PC-9 (cell line): ENCODE measurements at regions of chr17 and their contacts with region 1.

Region 1: DNA sequence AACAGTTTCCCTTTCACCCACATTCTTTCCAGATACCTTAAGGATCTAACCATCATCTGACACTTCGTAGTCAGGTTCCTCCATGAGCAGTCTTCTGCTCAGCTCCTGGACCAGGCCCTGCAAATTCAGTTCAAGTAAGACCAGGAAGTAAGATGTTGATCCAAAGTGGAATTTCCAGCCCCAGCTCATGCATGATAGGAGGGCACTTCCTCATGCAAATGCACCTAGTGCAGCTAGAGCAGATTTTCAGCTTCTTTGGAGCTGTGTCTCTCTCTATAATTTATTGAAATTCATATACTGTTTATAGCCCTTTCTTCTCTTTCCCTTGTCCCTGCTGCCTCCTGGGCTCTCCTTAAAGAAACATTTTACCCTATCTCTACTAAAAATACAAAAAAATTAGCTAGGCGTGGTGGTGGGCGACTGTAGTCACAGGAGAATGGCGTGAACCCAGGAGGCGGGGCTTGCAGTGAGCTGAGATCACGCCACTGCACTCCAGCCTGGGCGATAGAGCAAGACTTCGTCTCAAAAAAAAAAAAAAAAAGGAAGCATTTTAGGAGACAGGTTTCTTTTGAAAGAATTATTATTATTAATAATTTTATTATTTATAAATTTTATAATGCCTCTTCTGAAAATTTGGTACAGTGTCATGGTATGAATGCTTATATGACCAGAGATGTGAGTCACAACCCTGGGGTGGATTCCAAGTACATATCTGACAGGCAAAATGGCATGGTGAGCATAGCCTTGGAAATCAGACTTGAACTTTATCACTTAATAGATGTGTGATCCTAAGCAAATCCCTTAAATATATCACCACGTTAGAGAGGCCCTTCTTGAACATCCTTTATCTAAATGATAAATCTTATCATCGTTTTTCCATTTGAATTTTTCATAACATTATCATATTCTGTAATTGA is 94.3 kb downstream of the SSH2 start:
- DNase-seq: no peak
- H3K4me3 ChIP-seq: no peak overlapping the region
- H3K27ac ChIP-seq: no peak overlapping the region
- H3K4me1 ChIP-seq: peaks cover 17% of the 10 kb centered on the region; the same call in 1 of the 2 replicates
- H3K27me3 ChIP-seq: no peaks in the 10 kb centered on the region
- CTCF ChIP-seq: no peak

Region 2: GRCh38 chr17:29699283-29699682 is 136.4 kb before region 1 on chr17:
- CTCF ChIA-PET with region 1: no interaction called
- POLR2A ChIA-PET with region 1: interaction called, 11 read pairs
- intact Hi-C with region 1: no loop called
- DNase-seq: no peak
- H3K4me3 ChIP-seq: no peak overlapping the region
- H3K27ac ChIP-seq: no peak overlapping the region
- H3K4me1 ChIP-seq: no peaks in the 10 kb centered on the region
- H3K27me3 ChIP-seq: no peaks in the 10 kb centered on the region
- CTCF ChIP-seq: no peak